ENCODE measurements at regions of chr6 and their contacts with region 1.

Region 1: DNA sequence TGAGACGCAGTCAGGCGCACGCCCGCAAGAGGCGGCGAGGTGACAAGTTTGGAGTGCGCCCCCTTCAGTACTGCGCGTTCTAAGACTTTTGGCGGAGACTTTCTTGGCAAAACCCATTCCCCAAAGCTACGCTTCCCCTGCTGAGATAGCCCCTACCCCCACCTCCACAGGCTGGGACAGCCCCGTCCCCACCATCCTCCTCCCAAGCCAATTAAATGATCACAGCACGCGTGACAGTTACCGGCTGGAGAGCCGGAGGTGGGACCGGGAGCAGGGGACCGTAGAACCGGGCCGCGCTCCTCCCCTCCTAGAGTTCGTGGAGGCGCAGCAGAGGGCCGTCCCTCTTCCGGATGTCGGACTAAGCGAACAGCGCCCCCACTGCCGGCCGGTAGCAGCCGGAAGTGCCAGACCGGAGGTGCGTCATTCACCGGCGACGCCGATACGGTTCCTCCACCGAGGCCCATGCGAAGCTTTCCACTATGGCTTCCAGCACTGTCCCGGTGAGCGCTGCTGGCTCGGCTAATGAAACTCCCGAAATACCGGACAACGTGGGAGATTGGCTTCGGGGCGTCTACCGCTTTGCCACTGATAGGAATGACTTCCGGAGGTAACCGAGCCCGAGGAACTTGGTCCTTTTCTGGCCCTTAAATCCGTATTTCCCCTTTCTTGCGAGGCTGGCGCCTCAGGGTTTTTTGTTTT is at the start of gene TOMM6:
- DNase-seq: peak; percentile 96
- ATAC-seq: peak; percentile 74
- H3K4me3 Mint-ChIP-seq: peak within 1 kb of the TSS; percentile 96
- H3K27ac Mint-ChIP-seq: peak within 1 kb of the TSS; percentile 97
- H3K4me1 Mint-ChIP-seq: peaks cover 22% of the 10 kb centered on the region
- H3K27me3 Mint-ChIP-seq: peaks cover 38% of the 10 kb centered on the region
- CTCF ChIP-seq: peak; percentile 96
- total RNA-seq, gene TOMM6: 219 to 233 TPM (median 228 TPM) in 3 replicates

Region 2: DNA sequence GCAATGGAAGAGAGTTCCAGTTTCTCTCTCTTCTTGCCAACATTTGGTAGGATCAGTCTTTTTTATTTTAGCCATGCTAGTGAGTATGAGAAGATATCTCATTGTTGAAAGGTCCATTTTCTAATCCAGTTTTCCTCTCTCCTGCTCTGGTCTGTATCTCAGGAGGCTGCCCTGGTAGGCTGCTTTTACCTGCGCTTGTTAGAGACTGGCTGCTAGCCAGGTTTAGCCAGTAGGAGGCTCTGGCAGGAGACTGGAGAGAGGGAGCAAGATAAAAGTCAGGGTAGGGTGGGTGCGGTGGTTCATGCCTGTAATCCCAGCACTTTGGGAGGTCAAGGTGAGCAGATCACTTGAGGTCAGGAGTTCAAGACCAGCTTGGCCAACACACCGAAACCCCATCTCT is 309.8 kb before region 1 on chr6:
- CTCF ChIA-PET with region 1: no interaction called
- POLR2A ChIA-PET with region 1: no interaction called
- DNase-seq: peak; percentile 47
- ATAC-seq: peak; percentile 89
- H3K4me3 Mint-ChIP-seq: no peak overlapping the region
- H3K27ac Mint-ChIP-seq: no peak overlapping the region
- H3K4me1 Mint-ChIP-seq: peaks cover 14% of the 10 kb centered on the region
- H3K27me3 Mint-ChIP-seq: peaks cover 49% of the 10 kb centered on the region
- CTCF ChIP-seq: no peak

Region 3: GRCh38 chr6:41705996-41706835 is 81.2 kb before region 1 on chr6:
- CTCF ChIA-PET with region 1: interaction called, 25 read pairs
- POLR2A ChIA-PET with region 1: no interaction called
- DNase-seq: peak; percentile 81
- ATAC-seq: peak; percentile 91
- H3K4me3 Mint-ChIP-seq: no peak overlapping the region
- H3K27ac Mint-ChIP-seq: no peak overlapping the region
- H3K4me1 Mint-ChIP-seq: peaks cover 6% of the 10 kb centered on the region
- H3K27me3 Mint-ChIP-seq: no peaks in the 10 kb centered on the region
- CTCF ChIP-seq: peak; percentile 90

Region 4: GRCh38 chr6:41775293-41776181 is 11.8 kb before region 1 on chr6:
- CTCF ChIA-PET with region 1: interaction called, 20 read pairs
- POLR2A ChIA-PET with region 1: no interaction called
- DNase-seq: peak; percentile 52
- ATAC-seq: peak; percentile 59
- H3K4me3 Mint-ChIP-seq: no peak overlapping the region
- H3K27ac Mint-ChIP-seq: no peak overlapping the region
- H3K4me1 Mint-ChIP-seq: peaks cover 6% of the 10 kb centered on the region
- H3K27me3 Mint-ChIP-seq: no peaks in the 10 kb centered on the region
- CTCF ChIP-seq: peak; percentile 57; the same call in 1 of the 2 replicates

Region 5: DNA sequence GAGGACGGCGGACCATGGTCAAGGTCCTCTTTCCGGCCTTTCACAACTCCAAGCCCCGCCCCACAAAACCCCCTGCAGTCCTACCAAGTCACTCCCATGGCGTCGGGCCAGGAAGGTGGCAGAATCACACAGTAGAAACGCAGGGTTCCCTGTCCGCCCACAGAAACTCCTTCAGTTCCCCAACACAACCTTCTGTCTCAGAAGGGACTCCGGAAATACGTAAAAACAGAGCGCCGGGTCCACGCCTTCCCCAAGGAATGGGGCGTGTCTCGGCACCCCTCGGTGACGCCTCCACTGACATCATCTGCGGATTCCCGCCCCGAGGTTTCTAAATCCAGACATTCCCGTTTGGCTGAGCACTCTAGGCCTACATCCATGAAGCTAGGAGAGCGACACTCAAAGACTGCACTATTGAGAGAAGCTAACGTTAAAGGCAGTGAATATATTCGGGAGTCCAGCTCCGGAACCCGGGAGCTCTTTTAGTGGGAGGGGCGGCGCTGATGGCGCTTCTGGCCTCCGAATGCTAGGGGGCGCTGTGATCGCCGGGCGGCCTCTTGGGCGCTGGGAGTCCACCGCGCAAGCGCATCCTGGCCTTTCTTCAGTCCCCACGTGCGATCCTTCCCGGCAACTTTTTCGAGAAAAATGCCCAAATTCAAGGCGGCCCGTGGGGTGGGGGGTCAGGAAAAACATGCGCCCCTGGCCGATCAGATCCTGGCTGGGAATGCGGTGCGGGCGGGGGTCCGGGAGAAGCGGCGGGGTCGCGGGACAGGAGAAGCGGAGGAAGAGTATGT is 133.7 kb after region 1 on chr6 and contains the starts of genes BYSL and MED20:
- CTCF ChIA-PET with region 1: interaction called, 61 read pairs
- POLR2A ChIA-PET with region 1: interaction called, 6 read pairs
- DNase-seq: peak; percentile 92
- ATAC-seq: peak; percentile 83
- H3K4me3 Mint-ChIP-seq: peak within 1 kb of the TSS; percentile 98
- H3K27ac Mint-ChIP-seq: peak within 1 kb of the TSS; percentile 100
- H3K4me1 Mint-ChIP-seq: peaks cover 23% of the 10 kb centered on the region
- H3K27me3 Mint-ChIP-seq: no peaks in the 10 kb centered on the region
- CTCF ChIP-seq: peak; percentile 91
- total RNA-seq, gene BYSL: 40.3 to 50.8 TPM (median 43.8 TPM) in 3 replicates
- total RNA-seq, gene MED20: 37.5 to 42.4 TPM (median 38.9 TPM) in 3 replicates

Region 6: DNA sequence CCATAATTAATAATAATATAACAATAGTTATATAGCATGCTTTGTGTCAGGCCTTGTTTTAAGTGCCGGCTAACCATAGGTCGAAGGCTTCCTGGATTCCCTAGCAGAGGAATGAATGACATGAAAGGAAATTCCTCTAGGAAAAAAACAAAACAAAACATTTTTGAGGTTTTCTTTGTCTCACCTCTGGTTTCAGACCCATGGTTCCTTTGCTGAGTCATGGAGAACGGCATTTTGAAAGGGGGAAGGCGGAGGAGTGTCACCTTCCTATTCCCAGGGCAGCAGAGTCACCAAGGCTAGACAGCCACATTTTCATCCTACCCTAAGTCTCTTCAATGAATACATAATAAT is 179.6 kb after region 1 on chr6:
- CTCF ChIA-PET with region 1: interaction called, 24 read pairs
- POLR2A ChIA-PET with region 1: no interaction called
- DNase-seq: peak; percentile 17
- ATAC-seq: no peak
- H3K4me3 Mint-ChIP-seq: no peak overlapping the region
- H3K27ac Mint-ChIP-seq: peak overlapping the region; percentile 80
- H3K4me1 Mint-ChIP-seq: peaks cover 49% of the 10 kb centered on the region
- H3K27me3 Mint-ChIP-seq: no peaks in the 10 kb centered on the region
- CTCF ChIP-seq: no peak